ENCODE measurements at regions of chrX and their contacts with region 1.

Region 1: DNA sequence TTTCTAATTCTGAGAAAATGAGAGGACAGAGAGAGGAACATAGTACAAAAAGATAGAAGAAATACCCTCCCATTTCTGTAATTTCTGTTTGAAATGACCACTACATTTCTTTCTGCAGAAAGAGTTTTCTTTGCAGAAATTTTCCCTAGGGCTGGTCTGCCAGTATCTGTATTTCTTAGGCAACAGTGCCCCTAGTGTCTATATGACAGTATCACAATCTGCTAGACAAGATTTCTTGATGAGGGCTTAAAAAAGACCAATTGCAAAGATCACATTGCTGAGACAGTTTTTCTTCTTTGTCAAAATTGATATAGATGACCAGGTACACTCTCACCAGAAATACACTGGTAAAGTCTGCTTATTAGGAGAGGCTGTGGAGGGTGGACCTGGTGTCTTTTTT is 81.0 kb upstream of the ZDHHC15 start:
- DNase-seq: no peak
- ATAC-seq: peak in 1 of 4 donors; percentile 46
- H3K4me3 ChIP-seq: no peak overlapping the region
- H3K27ac ChIP-seq: no peak overlapping the region
- H3K4me1 ChIP-seq: no peaks in the 10 kb centered on the region
- H3K27me3 ChIP-seq: peaks cover 0 to 4% (median 0%) of the 10 kb centered on the region in 9 donors
- CTCF ChIP-seq: peak; percentile 40 to 75 (median 64)
- POLR2A ChIP-seq: no peak

Region 2: DNA sequence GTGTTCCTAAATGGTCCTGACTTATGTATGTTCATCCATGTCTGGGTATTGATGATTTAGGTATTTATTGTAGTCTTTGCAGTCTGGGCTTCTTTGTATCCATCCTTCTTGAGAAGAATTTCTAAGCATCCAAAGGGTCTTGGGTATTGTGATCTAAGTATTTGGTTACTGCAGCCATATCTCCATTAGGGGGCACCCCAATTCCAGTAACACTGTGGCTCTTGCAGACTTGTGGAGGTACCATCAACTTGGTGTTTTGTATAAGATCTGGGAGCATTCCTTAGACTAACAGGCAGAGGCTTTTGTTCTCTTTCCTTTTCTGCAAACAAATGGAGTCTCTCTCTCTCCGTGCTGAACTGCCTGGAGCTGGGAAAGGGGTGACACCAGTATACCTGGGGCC is 564.9 kb before region 1 on chrX:
- intact Hi-C with region 1: loop called in 3 of 10 experiments (anchors 10 kb)
- DNase-seq: no peak
- ATAC-seq: peak in 1 of 4 donors; percentile 29
- H3K4me3 ChIP-seq: no peak overlapping the region
- H3K27ac ChIP-seq: no peak overlapping the region
- H3K4me1 ChIP-seq: no peaks in the 10 kb centered on the region
- H3K27me3 ChIP-seq: no peaks in the 10 kb centered on the region
- CTCF ChIP-seq: peak in 7 of 12 donors; percentile 13 to 43 (median 28)
- POLR2A ChIP-seq: no peak

Region 3: DNA sequence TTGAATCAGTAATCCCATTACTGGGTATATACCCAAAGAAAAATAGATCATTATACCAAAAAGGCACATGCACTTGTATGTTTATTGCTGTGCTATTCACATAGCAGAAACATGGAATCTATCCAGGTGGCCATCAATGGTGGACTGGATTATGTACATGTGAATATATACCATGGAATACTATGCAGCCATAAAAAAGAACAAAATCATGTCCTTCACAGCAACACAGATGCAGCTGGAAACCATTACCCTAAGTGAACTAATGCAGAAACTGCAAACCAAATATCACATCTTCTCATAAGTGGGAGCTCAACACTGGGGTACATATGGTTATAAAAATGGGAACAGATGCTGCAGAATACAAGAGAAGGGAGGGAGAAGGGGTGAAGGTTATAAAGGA is 558.5 kb before region 1 on chrX:
- intact Hi-C with region 1: loop called in 1 of 10 experiments (anchors 10 kb)
- DNase-seq: no peak
- ATAC-seq: no peak
- H3K4me3 ChIP-seq: no peak overlapping the region
- H3K27ac ChIP-seq: no peak overlapping the region
- H3K4me1 ChIP-seq: no peaks in the 10 kb centered on the region
- H3K27me3 ChIP-seq: no peaks in the 10 kb centered on the region
- CTCF ChIP-seq: no peak
- POLR2A ChIP-seq: no peak